ENCODE measurements at regions of chr7 and their contacts with region 1.

Region 1: GRCh38 chr7:109622320-109622719 is 1052.6 kb downstream of the DNAJB9 start:
- DNase-seq: no peak
- ATAC-seq: no peak
- H3K4me3 ChIP-seq: no peak overlapping the region
- H3K4me3 Mint-ChIP-seq: no peak overlapping the region
- H3K27ac ChIP-seq: no peak overlapping the region
- H3K27ac Mint-ChIP-seq: no peak overlapping the region
- H3K4me1 ChIP-seq: no peaks in the 10 kb centered on the region
- H3K4me1 Mint-ChIP-seq: no peaks in the 10 kb centered on the region
- H3K27me3 ChIP-seq: no peaks in the 10 kb centered on the region
- H3K27me3 Mint-ChIP-seq: no peaks in the 10 kb centered on the region
- CTCF ChIP-seq: no peak

Region 2: GRCh38 chr7:109663806-109664205 is 41.5 kb after region 1 on chr7:
- CTCF ChIA-PET with region 1: no interaction called
- POLR2A ChIA-PET with region 1: no interaction called
- intact Hi-C with region 1: loop called in 1 of 2 experiments (anchors 1 kb)
- DNase-seq: no peak
- ATAC-seq: no peak
- H3K4me3 ChIP-seq: no peak overlapping the region
- H3K4me3 Mint-ChIP-seq: no peak overlapping the region
- H3K27ac ChIP-seq: no peak overlapping the region
- H3K27ac Mint-ChIP-seq: no peak overlapping the region
- H3K4me1 ChIP-seq: no peaks in the 10 kb centered on the region
- H3K4me1 Mint-ChIP-seq: no peaks in the 10 kb centered on the region
- H3K27me3 ChIP-seq: no peaks in the 10 kb centered on the region
- H3K27me3 Mint-ChIP-seq: no peaks in the 10 kb centered on the region
- CTCF ChIP-seq: no peak